Common myeloid progenitor, CD34-positive (primary cell): ENCODE measurements at regions of chr3 and their contacts with region 1.

Region 1: DNA sequence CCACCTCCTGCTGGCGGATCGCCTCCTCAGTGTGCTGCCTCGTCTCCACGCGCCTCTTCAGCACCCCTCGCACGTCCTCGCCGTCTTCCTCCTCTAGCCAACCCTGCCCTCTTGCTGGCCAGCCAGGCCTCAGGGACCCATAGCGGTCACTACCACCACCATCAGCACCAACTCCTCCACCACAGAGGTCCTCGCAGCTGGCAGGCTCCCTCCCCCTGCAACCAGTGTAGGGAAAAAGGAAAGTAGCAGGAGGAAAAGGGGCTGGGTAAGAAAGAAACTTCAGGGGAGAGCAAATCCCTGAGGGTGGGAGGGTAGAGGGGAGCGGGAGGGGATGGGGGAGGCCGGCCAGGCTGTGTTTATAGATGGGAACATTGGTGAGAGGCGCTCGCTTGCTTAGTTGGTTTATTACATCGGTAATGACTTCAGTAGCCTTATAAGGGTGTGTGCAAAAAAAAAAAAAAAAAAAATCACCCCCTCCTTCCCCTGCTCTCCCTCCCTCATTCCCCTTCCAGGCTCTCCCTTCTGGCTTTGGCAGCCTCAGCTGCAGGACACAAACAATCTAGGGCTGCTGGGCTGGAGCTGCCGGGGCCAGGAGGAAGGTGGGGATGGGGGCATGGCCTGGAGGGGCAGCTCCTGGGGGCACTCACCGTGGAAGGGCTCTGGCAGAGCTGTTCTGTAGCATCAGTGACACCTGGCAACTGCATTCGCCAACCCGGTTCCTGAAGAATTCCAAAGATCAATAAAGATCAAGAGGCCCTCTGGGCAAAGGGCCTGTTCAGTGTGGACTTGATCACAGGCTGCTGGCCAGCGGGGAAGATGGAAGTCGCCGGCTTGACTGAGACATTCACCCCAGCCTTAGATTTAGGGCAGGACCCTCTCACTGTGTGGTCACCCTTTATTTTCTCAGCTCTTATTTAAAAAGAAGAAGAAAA is 116.2 kb upstream of the HACD2 start:
- DNase-seq: no peak
- H3K4me3 ChIP-seq: no peak overlapping the region
- H3K27ac ChIP-seq: no peak overlapping the region
- H3K4me1 ChIP-seq: peaks cover 0 to 8% (median 4%) of the 10 kb centered on the region in 4 experiments
- H3K27me3 ChIP-seq: no peaks in the 10 kb centered on the region

Region 2: GRCh38 chr3:123712077-123712860 is 11.2 kb after region 1 on chr3:
- CTCF ChIA-PET with region 1: interaction called, 22 read pairs
- POLR2A ChIA-PET with region 1: no interaction called
- DNase-seq: no peak
- H3K4me3 ChIP-seq: no peak overlapping the region
- H3K27ac ChIP-seq: no peak overlapping the region
- H3K4me1 ChIP-seq: no peaks in the 10 kb centered on the region
- H3K27me3 ChIP-seq: peaks cover 0 to 3% (median 0%) of the 10 kb centered on the region in 5 experiments

Region 3: DNA sequence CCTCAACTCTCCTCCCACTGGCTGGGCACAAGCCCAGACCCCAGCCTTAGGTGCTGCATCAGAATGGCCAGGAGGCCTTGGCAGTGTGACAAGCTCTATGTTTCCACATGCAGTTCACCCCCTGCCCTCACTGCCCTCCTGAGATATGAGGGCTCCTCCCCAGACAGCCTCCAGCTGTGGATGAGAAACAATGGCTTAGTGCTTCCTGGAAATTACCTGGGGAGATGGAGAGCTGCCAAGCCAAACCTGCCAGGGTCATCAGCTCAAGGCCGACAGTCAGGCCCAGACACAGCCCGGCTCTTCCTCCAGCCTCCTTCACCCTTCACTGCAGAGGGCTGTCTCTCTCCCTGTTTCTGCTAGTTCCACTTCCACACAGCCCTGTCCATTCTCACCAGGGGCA is 106.8 kb after region 1 on chr3:
- CTCF ChIA-PET with region 1: no interaction called
- POLR2A ChIA-PET with region 1: no interaction called
- DNase-seq: no peak
- H3K4me3 ChIP-seq: no peak overlapping the region
- H3K27ac ChIP-seq: no peak overlapping the region
- H3K4me1 ChIP-seq: no peaks in the 10 kb centered on the region
- H3K27me3 ChIP-seq: peaks cover 0 to 4% (median 0%) of the 10 kb centered on the region in 5 experiments